Activated naive CD4-positive, alpha-beta T cell treated with anti-CD3 and anti-CD28 coated beads for 36 hours (primary cell): ENCODE measurements at regions of chr18 and their contacts with region 1.

Region 1: GRCh38 chr18:32552421-32553030 is 81.8 kb upstream of the GAREM1 start:
- DNase-seq: peak; percentile 75
- H3K4me3 Mint-ChIP-seq: no peak overlapping the region
- H3K27ac Mint-ChIP-seq: no peak overlapping the region
- H3K4me1 Mint-ChIP-seq: no peaks in the 10 kb centered on the region
- H3K27me3 Mint-ChIP-seq: peaks cover 2% of the 10 kb centered on the region

Region 2: GRCh38 chr18:32019251-32019948 is 533.1 kb before region 1 on chr18:
- CTCF ChIA-PET with region 1: no interaction called
- intact Hi-C with region 1: no loop called
- DNase-seq: peak; percentile 64
- H3K4me3 Mint-ChIP-seq: peak overlapping the region; percentile 99
- H3K27ac Mint-ChIP-seq: peak overlapping the region; percentile 93
- H3K4me1 Mint-ChIP-seq: peaks cover 41% of the 10 kb centered on the region
- H3K27me3 Mint-ChIP-seq: no peaks in the 10 kb centered on the region

Region 3: GRCh38 chr18:32158108-32158624 is 394.4 kb before region 1 on chr18:
- CTCF ChIA-PET with region 1: interaction called, 27 read pairs
- intact Hi-C with region 1: loop called (anchors 1 kb)
- DNase-seq: peak; percentile 80
- H3K4me3 Mint-ChIP-seq: peak overlapping the region; percentile 49
- H3K27ac Mint-ChIP-seq: no peak overlapping the region
- H3K4me1 Mint-ChIP-seq: peaks cover 5% of the 10 kb centered on the region
- H3K27me3 Mint-ChIP-seq: no peaks in the 10 kb centered on the region

Region 4: DNA sequence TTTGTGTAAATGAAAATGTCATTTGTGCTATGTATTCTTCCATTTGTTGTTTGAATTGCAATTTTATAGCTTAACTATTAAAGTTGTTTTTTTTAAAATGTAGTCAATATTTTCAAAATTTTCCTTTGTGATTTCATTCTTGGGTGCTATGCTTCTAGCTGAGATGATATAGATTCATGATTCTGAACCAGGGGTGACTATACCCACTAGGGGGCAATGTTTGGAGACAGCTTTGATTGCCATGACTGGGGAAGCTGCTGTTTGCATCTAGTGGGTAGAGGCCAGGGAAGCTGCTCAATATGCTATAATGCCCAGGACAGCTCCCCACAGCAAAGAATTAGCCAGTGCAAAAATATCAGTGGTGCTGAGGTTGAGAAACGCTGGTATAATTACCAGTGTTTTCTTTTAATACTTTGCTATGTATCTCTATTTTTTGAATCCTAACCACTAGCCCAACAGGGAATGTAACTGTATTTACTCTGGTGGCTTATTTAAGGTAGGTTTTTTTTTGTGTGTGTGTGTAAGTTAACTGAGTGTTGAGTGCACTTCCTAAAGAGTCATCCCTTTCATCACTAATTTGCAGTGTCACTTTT is 262.9 kb before region 1 on chr18:
- CTCF ChIA-PET with region 1: interaction called, 15 read pairs
- intact Hi-C with region 1: loop called (anchors 1 kb)
- DNase-seq: peak; percentile 64
- H3K4me3 Mint-ChIP-seq: no peak overlapping the region
- H3K27ac Mint-ChIP-seq: no peak overlapping the region
- H3K4me1 Mint-ChIP-seq: no peaks in the 10 kb centered on the region
- H3K27me3 Mint-ChIP-seq: peaks cover 9% of the 10 kb centered on the region

Region 5: GRCh38 chr18:32383050-32383819 is 169.3 kb before region 1 on chr18:
- CTCF ChIA-PET with region 1: interaction called, 4 read pairs
- intact Hi-C with region 1: loop called (anchors 5 kb)
- DNase-seq: no peak
- H3K4me3 Mint-ChIP-seq: no peak overlapping the region
- H3K27ac Mint-ChIP-seq: no peak overlapping the region
- H3K4me1 Mint-ChIP-seq: no peaks in the 10 kb centered on the region
- H3K27me3 Mint-ChIP-seq: peaks cover 1% of the 10 kb centered on the region

Region 6: DNA sequence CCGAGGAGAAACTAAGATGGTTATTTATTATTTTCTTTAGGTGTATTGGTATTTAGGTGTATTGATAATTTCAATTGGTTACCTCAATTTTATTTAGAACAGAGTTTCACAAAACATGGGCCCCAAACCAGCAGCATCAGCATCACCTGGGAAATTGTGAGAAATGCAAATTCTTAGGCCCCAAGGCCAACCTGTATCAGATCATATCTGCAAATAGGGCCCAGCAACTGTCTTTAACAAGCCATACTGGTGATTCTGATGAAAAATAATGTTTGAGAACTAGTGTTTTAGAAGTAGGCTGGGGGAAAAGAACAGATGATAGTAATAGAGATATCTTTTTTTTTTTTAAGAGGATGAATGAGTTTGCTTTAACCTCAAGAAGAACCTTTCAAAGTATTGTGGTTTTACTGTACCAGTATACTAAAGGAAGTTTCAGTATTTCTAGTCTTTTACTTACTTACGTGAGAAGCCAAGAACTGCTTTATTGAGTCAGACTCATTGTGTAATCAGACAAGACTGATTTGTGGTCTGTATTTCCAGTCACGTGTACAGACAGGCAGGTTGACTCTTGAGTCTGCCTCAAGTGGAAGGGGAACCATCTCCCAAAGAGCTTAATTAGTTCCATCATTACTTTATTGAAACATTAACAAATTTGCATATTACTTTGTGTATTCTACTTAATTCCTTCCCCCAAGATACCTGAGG is 21.4 kb before region 1 on chr18:
- CTCF ChIA-PET with region 1: no interaction called
- intact Hi-C with region 1: loop called (anchors 1 kb)
- DNase-seq: peak; percentile 40
- H3K4me3 Mint-ChIP-seq: no peak overlapping the region
- H3K27ac Mint-ChIP-seq: peak overlapping the region; percentile 9
- H3K4me1 Mint-ChIP-seq: peaks cover 17% of the 10 kb centered on the region
- H3K27me3 Mint-ChIP-seq: peaks cover 13% of the 10 kb centered on the region